Sigmoid colon (tissue), 7 donors: ENCODE measurements at regions of chr10 and their contacts with region 1.

Region 1: GRCh38 chr10:63521416-63522276 is 445 bp downstream of the REEP3 start:
- DNase-seq: peak; percentile 88
- H3K4me3 ChIP-seq: peak overlapping the region; percentile 80 to 92 (median 86)
- H3K27ac ChIP-seq: peak overlapping the region; percentile 98 to 100 (median 98)
- H3K4me1 ChIP-seq: peaks cover 0 to 80% (median 52%) of the 10 kb centered on the region in 4 donors
- H3K27me3 ChIP-seq: no peaks in the 10 kb centered on the region
- CTCF ChIP-seq: no peak
- EP300 ChIP-seq: no peak
- POLR2A ChIP-seq: peak in 1 of 2 donors; percentile 59

Region 2: DNA sequence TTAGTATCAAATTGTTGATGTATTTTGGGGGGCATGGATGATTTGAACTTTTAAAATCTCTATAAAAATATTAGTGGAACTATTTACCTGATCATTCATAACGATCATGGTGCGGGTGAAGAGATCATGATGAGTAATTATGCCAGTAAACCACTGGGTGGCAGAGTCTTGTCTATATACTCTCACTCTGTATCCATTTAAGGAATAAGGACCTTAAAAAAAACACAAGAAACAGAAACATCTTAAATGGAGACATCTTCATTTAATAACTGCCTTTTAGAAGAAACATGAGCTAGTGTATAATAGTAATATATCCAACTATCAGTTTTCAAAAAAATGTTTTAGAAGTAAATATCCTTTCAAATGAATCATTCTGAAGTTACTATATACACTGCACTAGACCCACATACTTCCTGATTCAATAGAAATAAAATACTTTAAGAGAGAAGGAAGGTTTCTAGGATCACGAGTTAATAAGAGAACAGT is 304.5 kb before region 1 on chr10:
- intact Hi-C with region 1: loop called (anchors 5 kb)
- DNase-seq: no peak
- H3K4me3 ChIP-seq: no peak overlapping the region
- H3K27ac ChIP-seq: peak overlapping the region in 3 of 4 donors; percentile 12 to 56 (median 56)
- H3K4me1 ChIP-seq: peaks cover 0 to 30% (median 13%) of the 10 kb centered on the region in 4 donors
- H3K27me3 ChIP-seq: no peaks in the 10 kb centered on the region
- CTCF ChIP-seq: peak; percentile 35 to 76 (median 68)
- EP300 ChIP-seq: no peak
- POLR2A ChIP-seq: no peak

Region 3: GRCh38 chr10:63268798-63269503 is 252.7 kb before region 1 on chr10:
- intact Hi-C with region 1: loop called (anchors 5 kb)
- DNase-seq: peak; percentile 95
- H3K4me3 ChIP-seq: peak overlapping the region; percentile 38 to 55 (median 52)
- H3K27ac ChIP-seq: peak overlapping the region; percentile 83 to 91 (median 90)
- H3K4me1 ChIP-seq: peaks cover 0 to 35% (median 19%) of the 10 kb centered on the region in 4 donors
- H3K27me3 ChIP-seq: no peaks in the 10 kb centered on the region
- CTCF ChIP-seq: peak in 2 of 4 experiments; percentile 14 to 44
- EP300 ChIP-seq: peak in 3 of 4 donors; percentile 49 to 92 (median 56)
- POLR2A ChIP-seq: peak; percentile 70 to 89

Region 4: DNA sequence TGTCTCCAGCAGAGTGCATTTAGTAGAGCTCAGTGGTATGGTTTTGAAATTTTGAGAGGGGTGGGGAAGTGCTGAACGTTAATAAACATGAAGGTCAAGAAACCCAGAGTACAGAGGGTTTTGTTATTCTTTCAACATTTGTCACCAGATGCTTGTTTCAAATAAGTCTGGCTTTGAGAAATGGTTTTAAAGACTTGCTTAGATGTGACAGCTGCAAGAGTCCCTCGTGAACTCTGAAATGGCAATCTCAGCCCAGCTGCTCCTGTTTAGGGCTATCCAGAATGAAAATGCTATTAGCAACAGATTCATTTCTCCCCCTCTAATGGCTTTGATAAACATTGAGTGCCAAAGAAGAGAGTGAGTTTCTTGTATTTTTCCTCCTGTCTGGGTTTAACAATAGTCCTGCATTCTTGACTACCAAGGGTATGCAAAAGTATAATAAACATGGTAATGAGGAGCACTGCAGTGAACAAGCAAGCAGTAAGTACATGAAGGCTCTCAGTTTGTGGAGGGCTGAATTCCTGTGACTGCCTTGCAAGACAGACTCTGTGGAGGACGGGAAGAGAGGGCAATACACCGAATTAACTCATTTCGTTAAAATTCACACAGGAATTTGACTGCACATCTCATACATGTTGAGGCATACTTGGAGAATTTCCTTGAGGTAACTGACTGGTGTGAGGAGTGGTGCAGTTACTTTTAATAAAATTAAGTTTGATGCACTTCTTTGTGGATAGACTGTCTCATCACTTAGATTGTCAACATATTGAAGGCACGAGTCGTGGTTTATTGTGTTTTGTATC is 490.5 kb after region 1 on chr10:
- intact Hi-C with region 1: no loop called
- DNase-seq: no peak
- H3K4me3 ChIP-seq: no peak overlapping the region
- H3K27ac ChIP-seq: no peak overlapping the region
- H3K4me1 ChIP-seq: no peaks in the 10 kb centered on the region
- H3K27me3 ChIP-seq: no peaks in the 10 kb centered on the region
- CTCF ChIP-seq: no peak
- EP300 ChIP-seq: no peak
- POLR2A ChIP-seq: no peak